ENCODE measurements at regions of chr11 and their contacts with region 1.

Region 1: GRCh38 chr11:27296497-27296896 is 66.5 kb downstream of the CCDC34 start:
- DNase-seq: no peak
- H3K4me3 Mint-ChIP-seq: no peak overlapping the region
- H3K27ac Mint-ChIP-seq: no peak overlapping the region
- H3K4me1 Mint-ChIP-seq: peaks cover 5% of the 10 kb centered on the region
- H3K27me3 Mint-ChIP-seq: peaks cover 22% of the 10 kb centered on the region

Region 2: GRCh38 chr11:27100534-27100933 is 196.0 kb before region 1 on chr11:
- intact Hi-C with region 1: no loop called
- DNase-seq: no peak
- H3K4me3 Mint-ChIP-seq: no peak overlapping the region
- H3K27ac Mint-ChIP-seq: no peak overlapping the region
- H3K4me1 Mint-ChIP-seq: no peaks in the 10 kb centered on the region
- H3K27me3 Mint-ChIP-seq: no peaks in the 10 kb centered on the region

Region 3: GRCh38 chr11:27183672-27184457 is 112.6 kb before region 1 on chr11:
- intact Hi-C with region 1: loop called (anchors 10 kb)
- DNase-seq: no peak
- H3K4me3 Mint-ChIP-seq: no peak overlapping the region
- H3K27ac Mint-ChIP-seq: no peak overlapping the region
- H3K4me1 Mint-ChIP-seq: no peaks in the 10 kb centered on the region
- H3K27me3 Mint-ChIP-seq: peaks cover 11% of the 10 kb centered on the region

Region 4: DNA sequence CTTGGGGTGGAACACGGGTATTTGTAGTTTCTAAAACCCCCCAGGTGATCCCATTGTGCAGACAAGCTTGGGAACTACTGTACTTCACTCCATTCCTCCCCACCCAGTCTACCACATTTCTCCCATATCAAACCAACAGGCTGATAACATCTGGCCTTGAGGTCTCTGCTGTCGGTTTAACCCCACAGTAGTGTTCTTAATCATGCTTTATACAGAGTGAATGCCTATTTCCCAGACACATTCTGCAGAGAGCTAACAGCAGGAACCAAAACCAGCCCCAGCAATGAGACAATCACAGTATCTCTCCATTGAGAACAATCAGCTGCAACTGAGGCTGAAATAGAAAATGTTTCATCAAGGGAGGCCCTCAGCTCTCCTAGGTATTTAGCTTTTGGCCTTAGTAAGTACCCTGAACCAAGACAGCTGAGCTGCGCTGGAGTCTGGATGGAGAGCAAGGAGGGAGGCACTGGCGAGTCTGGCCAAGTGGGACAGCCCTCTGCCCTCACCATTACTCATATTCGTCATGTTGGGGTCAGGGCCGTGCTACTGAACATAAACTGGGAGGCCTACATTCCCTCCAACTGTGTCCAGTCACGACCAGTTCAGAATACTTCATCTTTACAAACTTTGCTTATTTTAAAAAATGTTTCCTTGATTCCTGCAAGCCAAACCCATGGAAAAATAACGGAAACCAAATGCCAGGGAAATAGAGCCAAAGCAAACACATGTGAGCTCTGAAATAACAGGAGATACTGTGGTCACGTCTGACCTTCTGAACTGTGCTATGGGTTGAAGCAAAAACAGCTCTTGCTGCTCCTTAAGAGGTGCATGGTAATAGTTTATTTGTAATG is 14.5 kb before region 1 on chr11:
- intact Hi-C with region 1: no loop called
- DNase-seq: no peak
- H3K4me3 Mint-ChIP-seq: no peak overlapping the region
- H3K27ac Mint-ChIP-seq: peak overlapping the region; percentile 2
- H3K4me1 Mint-ChIP-seq: peaks cover 15% of the 10 kb centered on the region
- H3K27me3 Mint-ChIP-seq: peaks cover 23% of the 10 kb centered on the region

Region 5: GRCh38 chr11:27319072-27319471 is 22.6 kb after region 1 on chr11:
- intact Hi-C with region 1: loop called (anchors 2 kb)
- DNase-seq: no peak
- H3K4me3 Mint-ChIP-seq: no peak overlapping the region
- H3K27ac Mint-ChIP-seq: no peak overlapping the region
- H3K4me1 Mint-ChIP-seq: peaks cover 10% of the 10 kb centered on the region
- H3K27me3 Mint-ChIP-seq: peaks cover 18% of the 10 kb centered on the region

Measured in activated T-helper 2 cell treated with anti-CD3 and anti-CD28 coated beads, Interferon-gamma antibody, Interleukin-2, Interleukin-4, amounts not matched to agents 10 μg/mL and 5 μg/mL and 100 μg/mL, durations not matched to agents 14 hours and 24 hours and 36 hours (primary cell).